ENCODE measurements at regions of chr17 and their contacts with region 1.

Region 1: DNA sequence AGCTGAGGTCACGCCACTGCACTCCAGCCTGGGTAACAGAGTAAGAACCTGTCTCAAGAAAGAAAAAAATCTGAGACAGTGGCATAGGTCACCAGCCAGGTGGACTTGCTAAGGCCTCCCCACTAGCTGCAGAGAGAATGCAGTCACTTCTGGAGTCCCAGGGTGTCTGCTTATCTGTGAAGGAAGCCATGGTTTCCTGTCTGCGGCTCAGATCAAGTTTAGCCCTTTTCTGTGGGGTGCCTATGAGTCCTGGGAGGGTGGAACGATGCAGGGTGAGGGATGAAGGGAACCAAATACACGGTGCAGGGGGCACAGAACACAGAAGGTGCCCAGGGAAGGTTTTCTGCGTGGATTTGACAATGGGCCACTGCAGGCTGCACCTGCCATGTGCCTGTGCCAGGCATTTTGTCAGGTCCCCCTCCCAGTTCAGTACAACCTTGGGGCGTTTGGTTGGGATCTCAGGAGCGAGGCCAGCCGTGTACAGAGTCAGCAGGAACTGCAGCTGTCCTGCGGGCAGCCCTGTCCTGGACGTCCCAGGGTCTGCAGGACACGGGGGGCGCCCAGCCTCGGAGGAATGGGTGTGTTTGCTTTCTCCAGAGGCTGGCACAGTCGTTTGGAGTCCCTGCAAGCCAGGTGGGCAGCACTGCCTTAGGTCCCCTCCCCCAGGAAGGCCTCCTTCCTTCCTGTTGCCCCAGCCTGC is 41.8 kb downstream of the RAB11FIP4 start:
- DNase-seq: no peak
- H3K4me3 ChIP-seq: no peak overlapping the region
- H3K27ac ChIP-seq: no peak overlapping the region
- H3K4me1 ChIP-seq: peaks cover 0 to 6% (median 0%) of the 10 kb centered on the region in 4 donors
- H3K27me3 ChIP-seq: peaks cover 0 to 49% of the 10 kb centered on the region in 2 donors
- CTCF ChIP-seq: no peak

Region 2: DNA sequence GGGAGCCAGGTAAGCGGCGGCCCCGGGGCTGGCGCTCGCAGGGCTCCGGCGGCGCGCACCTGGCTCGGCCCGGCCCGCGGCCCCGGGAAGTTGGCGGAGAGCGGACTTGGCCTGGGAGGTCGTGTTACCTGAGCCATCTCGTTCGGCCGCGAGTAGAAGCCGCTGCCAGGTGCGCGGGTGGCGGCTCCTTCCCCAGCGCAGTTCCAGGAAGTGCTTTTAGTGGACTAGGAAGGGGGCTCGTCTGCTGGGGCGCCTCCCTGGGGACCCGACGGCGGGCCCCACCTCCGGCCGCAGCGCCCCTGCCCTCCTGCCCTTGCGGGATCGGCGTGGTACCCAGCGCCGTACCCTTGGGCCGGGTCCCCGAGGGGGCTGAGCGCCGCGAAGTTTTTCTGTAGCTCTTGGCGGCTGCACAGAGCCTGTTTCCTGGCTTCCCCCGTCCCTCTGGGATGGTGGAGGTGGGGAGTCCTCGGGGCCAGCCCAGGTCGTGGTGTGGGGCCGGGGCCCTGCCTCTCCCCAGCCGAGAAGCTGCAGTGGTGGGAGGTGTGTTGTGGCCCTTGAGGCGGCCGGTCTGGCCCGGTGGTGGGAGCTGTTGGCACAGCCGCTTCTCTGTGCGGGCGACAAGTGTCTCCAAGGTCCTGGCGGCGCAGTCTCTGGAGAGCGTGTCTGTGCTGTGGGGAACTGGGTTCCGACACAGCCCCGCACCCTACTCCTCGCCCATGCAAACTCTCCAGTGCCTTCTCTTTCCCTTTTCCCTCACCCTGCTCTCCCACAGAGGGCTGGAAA is 55.2 kb after region 1 on chr17:
- intact Hi-C with region 1: no loop called
- DNase-seq: no peak
- H3K4me3 ChIP-seq: peak overlapping the region; percentile 47 to 65
- H3K27ac ChIP-seq: no peak overlapping the region
- H3K4me1 ChIP-seq: peaks cover 0 to 22% (median 19%) of the 10 kb centered on the region in 4 donors
- H3K27me3 ChIP-seq: peaks cover 0 to 35% of the 10 kb centered on the region in 2 donors
- CTCF ChIP-seq: no peak

Region 3: GRCh38 chr17:31524926-31525800 is 91.9 kb after region 1 on chr17:
- intact Hi-C with region 1: loop called (anchors 2 kb)
- DNase-seq: peak; percentile 87 to 90
- H3K4me3 ChIP-seq: no peak overlapping the region
- H3K27ac ChIP-seq: no peak overlapping the region
- H3K4me1 ChIP-seq: peaks cover 0 to 23% (median 4%) of the 10 kb centered on the region in 4 donors
- H3K27me3 ChIP-seq: peaks cover 0 to 13% of the 10 kb centered on the region in 2 donors
- CTCF ChIP-seq: peak; percentile 91 to 96

Region 4: DNA sequence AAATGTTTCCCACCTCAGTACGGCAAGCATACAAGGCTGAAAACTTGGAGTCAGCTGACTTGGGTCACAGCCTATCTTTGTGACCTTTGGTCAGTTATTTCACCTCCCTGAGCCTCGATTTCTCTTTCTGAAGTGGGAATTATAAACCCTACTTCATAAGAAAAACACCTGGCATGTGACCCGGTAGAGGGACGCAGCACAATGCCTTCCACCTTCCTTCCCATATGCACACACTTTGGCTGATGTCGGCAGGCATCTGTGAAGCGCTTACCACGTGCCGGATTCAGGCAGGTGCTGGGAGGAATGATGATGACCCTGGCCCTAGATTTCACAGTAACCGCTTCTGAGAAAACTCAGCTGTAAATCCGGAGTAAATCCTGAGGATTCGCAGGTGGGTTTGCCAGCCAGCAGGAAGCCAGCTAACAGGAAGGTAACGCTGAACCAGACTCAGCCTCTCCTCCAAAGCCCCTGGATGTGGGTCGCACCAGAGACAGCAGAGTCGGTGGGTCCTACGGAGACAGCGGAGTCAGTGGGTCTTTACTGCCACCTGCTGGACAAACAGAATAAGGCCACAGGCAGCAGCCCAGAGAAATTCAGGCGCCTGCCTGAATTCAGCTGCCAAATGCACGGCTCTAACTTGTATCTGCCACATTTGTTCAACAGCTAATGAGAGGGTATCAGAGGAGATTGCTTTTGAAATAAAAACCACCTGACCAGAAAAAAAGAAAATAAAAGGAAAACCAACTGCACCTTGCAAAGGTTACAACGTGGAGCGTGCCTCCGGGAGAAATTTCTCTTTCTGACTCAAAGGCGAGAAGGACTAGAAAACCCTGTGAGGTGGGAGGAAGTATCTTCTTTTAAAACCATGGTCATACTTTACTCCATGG is 409.2 kb after region 1 on chr17:
- intact Hi-C with region 1: loop called (anchors 10 kb)
- DNase-seq: peak; percentile 57 to 83
- H3K4me3 ChIP-seq: peak overlapping the region; percentile 23 to 40
- H3K27ac ChIP-seq: peak overlapping the region; percentile 76 to 80
- H3K4me1 ChIP-seq: peaks cover 0 to 64% (median 28%) of the 10 kb centered on the region in 4 donors
- H3K27me3 ChIP-seq: no peaks in the 10 kb centered on the region
- CTCF ChIP-seq: peak; percentile 98 to 99

Region 5: GRCh38 chr17:31907342-31907962 is 474.2 kb after region 1 on chr17:
- intact Hi-C with region 1: loop called (anchors 10 kb)
- DNase-seq: peak; percentile 45 to 70
- H3K4me3 ChIP-seq: no peak overlapping the region
- H3K27ac ChIP-seq: no peak overlapping the region
- H3K4me1 ChIP-seq: peaks cover 0 to 16% (median 10%) of the 10 kb centered on the region in 4 donors
- H3K27me3 ChIP-seq: no peaks in the 10 kb centered on the region
- CTCF ChIP-seq: no peak

Measured in tibial artery (tissue), 4 donors.